ENCODE measurements at regions of chr15 and their contacts with region 1.

Region 1: DNA sequence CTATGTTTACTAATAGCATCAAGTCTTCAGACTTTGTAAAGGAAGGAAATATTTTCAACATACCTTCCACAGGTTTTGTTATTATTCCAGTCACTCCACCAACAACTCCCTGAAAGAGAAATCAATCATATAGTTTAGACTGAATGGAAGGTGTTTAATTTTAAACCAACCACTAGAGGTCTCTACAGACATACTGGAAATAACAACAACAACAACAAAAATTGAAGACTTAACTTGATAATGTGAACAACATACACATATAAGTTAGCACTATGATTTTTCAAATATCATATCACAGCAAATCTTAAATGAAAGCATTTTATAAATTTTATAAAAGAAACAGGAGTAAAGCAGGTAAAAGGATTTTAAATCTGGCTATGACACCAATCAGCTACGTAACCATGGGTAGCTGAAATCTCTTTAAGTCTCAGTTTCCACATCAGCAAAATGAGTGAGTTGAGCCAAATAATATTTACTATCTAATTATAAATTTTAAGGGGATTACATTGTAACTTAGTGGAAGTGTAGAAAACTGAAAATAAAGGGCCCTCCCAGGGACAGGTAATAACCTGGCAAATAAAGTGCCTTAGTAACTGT is 188.2 kb downstream of the VPS13C start:
- DNase-seq: no peak
- H3K4me3 ChIP-seq: no peak overlapping the region
- H3K27ac ChIP-seq: no peak overlapping the region
- H3K4me1 ChIP-seq: no peaks in the 10 kb centered on the region
- H3K27me3 ChIP-seq: no peaks in the 10 kb centered on the region
- CTCF ChIP-seq: peak in 1 of 3 experiments; percentile 33

Region 2: GRCh38 chr15:62306851-62307504 is 435.0 kb after region 1 on chr15:
- intact Hi-C with region 1: loop called (anchors 10 kb)
- DNase-seq: peak in 1 of 2 donors; percentile 75
- H3K4me3 ChIP-seq: no peak overlapping the region
- H3K27ac ChIP-seq: no peak overlapping the region
- H3K4me1 ChIP-seq: peaks cover 0 to 2% of the 10 kb centered on the region in 2 donors
- H3K27me3 ChIP-seq: no peaks in the 10 kb centered on the region
- CTCF ChIP-seq: peak in 2 of 3 experiments; percentile 59 to 71

Measured in ascending aorta (tissue), 2 donors.